Common myeloid progenitor, CD34-positive (primary cell): ENCODE measurements at regions of chr20 and their contacts with region 1.

Region 1: GRCh38 chr20:49384437-49385088 is 97.9 kb downstream of the KCNB1 start:
- DNase-seq: peak; percentile 71 to 77 (median 71)
- H3K4me3 ChIP-seq: no peak overlapping the region
- H3K27ac ChIP-seq: no peak overlapping the region
- H3K4me1 ChIP-seq: no peaks in the 10 kb centered on the region
- H3K27me3 ChIP-seq: peaks cover 3 to 13% (median 7%) of the 10 kb centered on the region in 5 experiments

Region 2: DNA sequence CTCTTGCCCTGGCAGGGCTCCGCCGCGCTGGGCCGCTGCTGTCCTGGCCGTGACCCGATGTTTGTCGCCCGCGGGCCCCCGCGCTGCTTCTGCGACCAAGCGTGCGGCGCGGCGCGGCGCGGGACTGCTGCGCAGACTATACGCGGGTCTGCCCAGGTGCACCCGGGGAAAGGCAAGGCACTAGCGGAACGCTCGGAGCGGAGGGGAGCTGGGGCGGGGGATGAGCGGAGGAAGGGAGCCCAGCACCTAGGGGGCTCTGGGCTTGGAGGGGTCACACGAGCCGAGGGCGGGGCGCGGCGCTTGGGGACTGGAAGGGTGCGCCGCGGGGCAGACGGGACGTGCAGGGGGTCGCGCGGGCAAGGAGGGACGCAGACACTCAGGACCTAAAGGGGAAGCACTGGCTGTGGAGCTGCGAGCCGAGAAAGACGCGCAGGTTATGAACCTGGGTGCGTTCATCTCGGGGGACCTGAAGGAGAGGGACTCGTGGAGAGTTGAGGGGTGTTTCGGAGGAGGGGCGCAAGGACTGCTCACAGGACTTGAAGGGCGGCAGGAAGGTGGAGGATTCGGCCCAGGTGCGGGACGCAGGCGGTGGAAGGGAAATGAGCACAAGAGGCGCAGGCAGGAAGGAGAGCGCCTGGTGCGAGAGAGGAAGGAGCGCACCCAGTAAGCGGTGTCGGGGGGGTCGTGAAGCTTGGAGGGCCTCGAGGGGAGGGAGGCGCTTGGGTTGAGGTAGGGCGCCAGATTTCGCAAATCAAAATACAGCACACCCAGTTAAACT is 65.9 kb before region 1 on chr20:
- CTCF ChIA-PET with region 1: no interaction called
- POLR2A ChIA-PET with region 1: no interaction called
- DNase-seq: peak in 2 of 3 donors; percentile 54 to 67
- H3K4me3 ChIP-seq: peak overlapping the region; percentile 43 to 81 (median 71)
- H3K27ac ChIP-seq: no peak overlapping the region
- H3K4me1 ChIP-seq: peaks cover 0 to 37% (median 18%) of the 10 kb centered on the region in 4 experiments
- H3K27me3 ChIP-seq: peaks cover 7 to 35% (median 15%) of the 10 kb centered on the region in 5 experiments

Region 3: GRCh38 chr20:49368596-49368995 is 16.0 kb before region 1 on chr20:
- CTCF ChIA-PET with region 1: no interaction called
- POLR2A ChIA-PET with region 1: no interaction called
- DNase-seq: no peak
- H3K4me3 ChIP-seq: no peak overlapping the region
- H3K27ac ChIP-seq: no peak overlapping the region
- H3K4me1 ChIP-seq: no peaks in the 10 kb centered on the region
- H3K27me3 ChIP-seq: peaks cover 0 to 44% (median 7%) of the 10 kb centered on the region in 5 experiments

Region 4: DNA sequence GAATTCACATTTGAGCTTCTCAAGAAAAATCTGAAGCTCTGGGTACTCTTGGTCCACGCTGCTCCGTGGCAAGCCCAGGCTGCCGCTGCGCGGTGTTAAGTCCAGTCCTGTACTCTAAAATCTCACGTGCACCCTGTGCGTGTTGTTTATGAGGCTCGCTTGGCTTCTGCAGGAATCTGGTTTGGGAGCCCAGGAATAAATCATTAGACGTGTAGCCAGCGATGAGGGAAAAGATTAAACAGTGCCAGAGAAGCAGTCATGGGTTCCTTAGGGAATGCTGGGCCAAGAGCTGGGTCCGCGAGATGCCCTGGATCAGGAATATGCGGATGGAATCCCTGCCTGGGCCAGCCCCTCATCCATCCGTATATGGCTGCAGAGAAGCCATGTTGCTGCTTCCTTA is 10.6 kb after region 1 on chr20:
- CTCF ChIA-PET with region 1: interaction called, 19 read pairs
- POLR2A ChIA-PET with region 1: no interaction called
- DNase-seq: no peak
- H3K4me3 ChIP-seq: no peak overlapping the region
- H3K27ac ChIP-seq: no peak overlapping the region
- H3K4me1 ChIP-seq: no peaks in the 10 kb centered on the region
- H3K27me3 ChIP-seq: peaks cover 0 to 14% (median 0%) of the 10 kb centered on the region in 5 experiments